ENCODE measurements at regions of chr17 and their contacts with region 1.

Region 1: DNA sequence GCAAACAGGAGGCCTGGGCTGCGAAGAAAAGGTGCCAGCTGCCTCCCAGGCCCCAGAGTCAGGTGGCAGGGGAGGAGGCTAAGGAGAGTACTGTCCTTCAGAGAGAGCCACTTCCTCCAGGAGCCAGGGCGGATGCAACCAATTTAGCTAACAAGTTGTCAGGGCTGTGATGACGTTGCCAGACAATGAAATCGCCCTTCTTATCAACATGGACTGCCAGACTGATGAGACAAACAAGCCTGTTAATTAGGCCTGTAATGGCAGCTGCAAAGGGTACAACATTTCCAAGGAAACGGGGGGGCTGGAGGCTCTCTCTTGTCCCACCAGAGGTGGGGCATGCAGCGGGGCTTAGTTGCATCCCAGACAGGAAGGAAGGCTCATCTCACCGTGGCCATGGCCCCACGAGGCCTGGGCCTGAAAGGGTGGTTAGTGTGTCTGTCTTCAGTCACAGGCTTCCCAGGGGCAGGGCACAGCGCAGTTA is 111.8 kb downstream of the SDK2 start:
- DNase-seq: no peak

Region 2: GRCh38 chr17:73429440-73430164 is 102.9 kb before region 1 on chr17:
- intact Hi-C with region 1: no loop called
- DNase-seq: peak; percentile 91

Region 3: DNA sequence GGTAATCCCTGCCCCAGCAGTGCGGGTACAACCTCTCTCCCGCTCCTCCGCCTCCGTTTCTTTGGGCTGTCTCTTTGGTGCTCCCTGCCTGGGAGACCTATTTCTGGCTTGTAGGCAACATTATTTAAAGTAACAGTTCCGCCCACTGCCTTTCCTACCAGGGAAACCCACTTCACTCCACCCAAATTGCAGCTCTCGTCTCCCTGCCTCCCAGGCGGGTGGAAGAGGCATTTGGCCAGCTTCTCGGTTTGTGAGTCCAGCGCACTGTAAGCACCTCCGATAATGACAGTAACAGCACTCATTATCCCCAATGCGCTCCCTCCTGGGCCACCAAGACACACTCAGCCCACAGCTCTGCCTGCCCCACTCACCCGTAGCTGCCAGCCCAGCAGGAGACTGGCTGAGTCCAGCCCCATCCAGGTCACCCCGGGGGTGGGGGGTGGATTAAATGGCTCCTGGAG is 55.5 kb before region 1 on chr17:
- intact Hi-C with region 1: loop called (anchors 1 kb)
- DNase-seq: peak; percentile 83

Region 4: DNA sequence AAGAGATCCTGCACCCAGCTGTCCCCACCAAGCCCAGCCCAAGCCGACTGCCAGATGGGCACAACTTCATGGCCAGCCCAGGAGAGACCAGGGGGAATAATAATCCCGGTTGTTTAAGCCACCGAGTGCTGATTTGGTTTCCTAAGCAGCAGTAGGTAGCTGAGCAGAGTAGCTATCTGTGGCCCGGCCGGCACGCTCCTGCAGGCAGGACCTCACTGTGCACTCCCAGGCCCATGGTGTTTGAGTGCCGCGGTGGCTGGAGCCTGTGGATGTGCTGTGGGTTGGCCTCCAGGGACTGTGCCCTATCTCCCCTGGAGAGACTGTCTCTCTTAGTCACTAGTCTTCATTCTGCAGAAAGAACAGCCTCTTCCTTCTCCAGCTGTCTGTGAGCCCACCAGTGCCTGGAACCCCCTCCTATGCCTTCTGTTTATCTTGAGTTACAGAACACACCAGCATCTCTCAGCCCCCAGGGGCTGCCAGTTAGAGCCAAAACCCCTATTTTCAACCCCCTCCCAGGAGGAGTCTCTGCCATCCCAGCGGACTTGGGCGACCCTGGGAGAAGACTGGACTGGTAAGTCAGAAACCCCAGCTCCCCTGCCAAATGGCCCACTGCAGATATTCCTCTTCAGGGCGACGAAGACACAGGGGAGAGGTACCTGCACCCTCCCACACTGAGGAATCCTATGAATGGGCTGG is 40.2 kb before region 1 on chr17:
- intact Hi-C with region 1: no loop called
- DNase-seq: no peak

Region 5: GRCh38 chr17:73586921-73587602 is 54.6 kb after region 1 on chr17:
- intact Hi-C with region 1: loop called (anchors 10 kb)
- DNase-seq: no peak

Region 6: DNA sequence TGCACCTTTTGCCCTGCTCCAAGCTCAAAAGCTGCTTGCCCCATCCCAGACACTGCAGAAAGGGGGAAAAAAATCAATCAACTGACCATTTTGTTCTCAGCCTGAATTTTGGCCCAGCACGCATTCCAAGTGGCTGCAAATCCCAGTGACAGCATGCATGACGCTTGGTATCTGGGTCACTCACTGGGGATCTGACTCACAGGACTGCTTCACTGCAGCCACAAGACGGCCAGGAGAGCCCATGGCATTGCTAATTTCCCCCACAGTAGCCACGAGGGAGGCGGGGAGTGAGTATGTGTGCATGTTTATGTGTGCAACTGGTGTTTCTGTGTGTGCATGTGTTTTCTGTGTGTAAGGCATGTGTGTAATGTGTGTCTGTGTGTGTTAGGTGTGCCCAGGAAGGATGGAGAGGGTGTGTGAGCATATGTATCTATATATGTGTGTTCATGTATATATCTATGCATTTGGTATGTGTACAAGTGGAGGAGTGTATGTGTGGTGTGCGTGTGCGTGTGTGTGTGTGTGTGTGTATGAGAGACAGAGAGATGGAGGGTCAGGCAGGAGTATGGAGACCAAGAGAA is 78.0 kb after region 1 on chr17:
- intact Hi-C with region 1: no loop called
- DNase-seq: no peak

Region 7: GRCh38 chr17:73645050-73645978 is 112.9 kb after region 1 on chr17:
- intact Hi-C with region 1: loop called (anchors 5 kb)
- DNase-seq: no peak

Measured in cardiac septum (tissue), 1 donor.